ENCODE measurements at regions of chr5 and their contacts with region 1.

Region 1: GRCh38 chr5:177982072-177982727 is 13.8 kb downstream of the PROP1 start:
- DNase-seq: peak in 2 of 4 experiments; percentile 28 to 41
- ATAC-seq: peak; percentile 78
- H3K4me3 ChIP-seq: no peak overlapping the region
- H3K27ac ChIP-seq: no peak overlapping the region
- H3K4me1 ChIP-seq: peaks cover 0 to 12% of the 10 kb centered on the region in 2 experiments; a peak in 1 of 5 replicates
- H3K27me3 ChIP-seq: peaks cover 26 to 52% of the 10 kb centered on the region in 2 experiments; a peak in 4 of 5 replicates
- CTCF ChIP-seq: peak; percentile 48 to 70 (median 63)
- EP300 ChIP-seq: no peak
- POLR2A ChIP-seq: no peak
- RAD21 ChIP-seq: peak in 1 of 2 experiments; percentile 67; a peak in 2 of 4 replicates

Region 2: DNA sequence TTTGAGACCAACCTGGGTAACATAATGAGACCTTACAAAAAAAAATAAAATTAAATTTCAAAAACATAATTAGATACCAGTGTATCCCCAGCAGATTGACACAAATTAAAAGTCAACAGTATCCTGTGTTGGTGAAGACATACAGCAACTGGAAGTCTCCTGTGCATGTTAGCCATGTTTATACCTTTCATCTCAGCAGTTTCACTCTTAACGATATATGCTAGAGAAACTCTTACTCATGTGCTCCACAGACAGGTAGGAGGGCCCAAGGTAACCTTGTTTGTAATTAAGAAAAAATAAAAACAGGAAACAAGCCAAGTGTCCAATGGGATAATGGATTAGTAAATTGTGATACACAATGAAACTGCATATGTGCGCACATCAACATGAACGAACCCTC is 81.1 kb after region 1 on chr5:
- CTCF ChIA-PET with region 1: interaction called, 6 read pairs
- POLR2A ChIA-PET with region 1: no interaction called
- in situ Hi-C with region 1: loop called (anchors 5 kb)
- intact Hi-C with region 1: no loop called
- DNase-seq: no peak
- ATAC-seq: no peak
- H3K4me3 ChIP-seq: no peak overlapping the region
- H3K27ac ChIP-seq: no peak overlapping the region
- H3K4me1 ChIP-seq: no peaks in the 10 kb centered on the region
- H3K27me3 ChIP-seq: peaks cover 25 to 40% of the 10 kb centered on the region in 2 experiments
- CTCF ChIP-seq: no peak
- EP300 ChIP-seq: no peak
- POLR2A ChIP-seq: no peak
- RAD21 ChIP-seq: no peak

Region 3: GRCh38 chr5:178204182-178204894 is 222.1 kb after region 1 on chr5 and contains the start of gene HNRNPAB:
- CTCF ChIA-PET with region 1: no interaction called
- POLR2A ChIA-PET with region 1: no interaction called
- in situ Hi-C with region 1: no loop called
- intact Hi-C with region 1: no loop called
- DNase-seq: peak; percentile 97 to 100 (median 98)
- ATAC-seq: peak; percentile 87
- H3K4me3 ChIP-seq: peak within 1 kb of the TSS; percentile 80
- H3K27ac ChIP-seq: peak within 1 kb of the TSS; percentile 94
- H3K4me1 ChIP-seq: peaks cover 21 to 23% of the 10 kb centered on the region in 2 experiments; a peak in 4 of 5 replicates
- H3K27me3 ChIP-seq: no peaks in the 10 kb centered on the region
- CTCF ChIP-seq: no peak
- EP300 ChIP-seq: no peak
- POLR2A ChIP-seq: peak; percentile 100
- RAD21 ChIP-seq: no peak
- polyA plus RNA-seq, gene HNRNPAB: 34.6 to 44.7 TPM

Region 4: DNA sequence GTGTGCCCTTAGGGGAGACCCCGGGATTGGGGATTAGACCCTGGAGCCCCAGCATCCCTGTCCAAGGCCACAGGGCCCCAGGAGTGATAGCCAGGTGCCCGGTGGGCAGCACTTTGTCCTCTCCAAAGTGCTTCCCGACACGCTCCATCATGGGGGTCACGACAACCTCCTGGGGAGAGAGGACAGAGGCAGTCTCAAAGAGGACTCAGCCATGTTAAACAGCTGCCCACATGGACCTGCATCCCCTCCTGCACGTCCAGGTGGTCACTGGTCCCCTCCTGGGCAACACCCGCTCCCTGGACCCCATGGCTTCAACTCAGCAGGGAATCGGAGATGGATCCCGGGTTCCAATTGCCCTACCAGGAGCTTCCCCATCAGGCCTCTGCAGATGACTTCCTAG is 1661.4 kb after region 1 on chr5:
- CTCF ChIA-PET with region 1: no interaction called
- POLR2A ChIA-PET with region 1: no interaction called
- in situ Hi-C with region 1: loop called (anchors 5 kb)
- intact Hi-C with region 1: no loop called
- DNase-seq: peak in 2 of 4 experiments; percentile 6 to 10
- ATAC-seq: no peak
- H3K4me3 ChIP-seq: no peak overlapping the region
- H3K27ac ChIP-seq: no peak overlapping the region
- H3K4me1 ChIP-seq: no peaks in the 10 kb centered on the region; a peak in 1 of 5 replicates
- H3K27me3 ChIP-seq: peaks cover 5 to 13% of the 10 kb centered on the region in 2 experiments
- CTCF ChIP-seq: no peak
- EP300 ChIP-seq: no peak
- POLR2A ChIP-seq: no peak
- RAD21 ChIP-seq: no peak